Dorsolateral prefrontal cortex (tissue), 120 donors: ENCODE measurements at regions of chr9 and their contacts with region 1.

Region 1: GRCh38 chr9:137188490-137189296 is at the starts of genes ANAPC2 and SSNA1:
- DNase-seq: peak; percentile 85 to 93 (median 91)
- H3K4me3 ChIP-seq: peak within 1 kb of the TSS; percentile 59 to 100 (median 97)
- H3K27ac ChIP-seq: peak within 1 kb of the TSS; percentile 84 to 100 (median 99)
- H3K27me3 ChIP-seq: no peaks in the 10 kb centered on the region
- CTCF ChIP-seq: peak in 55 of 56 donors; percentile 11 to 85 (median 53)
- total RNA-seq, gene ANAPC2: 51.4 to 105 (median 68.3) TPM
- total RNA-seq, gene SSNA1: 37.0 to 77.8 (median 49.6) TPM

Region 2: DNA sequence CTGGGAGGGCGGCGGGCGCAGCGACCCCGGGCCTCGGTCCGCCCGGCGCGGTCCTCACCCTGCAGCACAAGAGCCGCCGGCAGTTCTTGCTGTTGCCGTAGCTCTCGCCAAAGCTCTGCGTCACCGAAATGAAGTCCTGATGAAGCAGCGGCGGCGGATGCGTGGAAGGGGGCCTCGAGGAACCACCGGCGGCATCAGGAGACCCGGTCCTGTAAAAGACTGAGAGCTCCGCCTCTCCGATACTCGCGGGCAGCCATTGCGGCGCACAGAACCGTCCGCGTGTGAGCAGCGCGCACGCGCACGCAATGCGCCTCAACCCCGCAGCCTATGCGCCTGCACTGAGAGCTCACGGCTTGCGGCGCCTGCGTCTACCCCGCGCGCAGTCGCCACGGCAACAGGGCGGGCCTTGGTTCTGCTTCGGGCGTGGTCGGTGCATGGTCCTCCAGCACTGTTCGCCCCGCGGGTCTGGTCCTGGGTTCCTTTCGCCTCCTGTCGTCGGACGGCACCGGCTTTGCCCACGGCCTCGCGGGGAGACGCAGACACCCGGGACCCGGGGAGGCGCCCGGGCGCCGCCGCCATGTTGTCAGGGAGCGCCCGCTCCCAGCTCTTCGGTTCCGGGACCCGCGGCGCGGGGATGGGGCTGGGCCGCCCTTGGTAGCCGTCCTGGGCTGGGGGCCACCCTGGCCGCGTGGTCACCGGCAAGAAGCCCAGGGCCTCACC is 59.1 kb before region 1 on chr9:
- intact Hi-C with region 1: loop called in 1 of 2 experiments (anchors 5 kb)
- DNase-seq: peak; percentile 70 to 92 (median 86)
- H3K4me3 ChIP-seq: peak overlapping the region; percentile 54 to 88 (median 78)
- H3K27ac ChIP-seq: peak overlapping the region in 55 of 59 donors; percentile 24 to 89 (median 73)
- H3K27me3 ChIP-seq: peaks cover 0 to 18% (median 0%) of the 10 kb centered on the region in 45 donors
- CTCF ChIP-seq: peak in 9 of 56 donors; percentile 9 to 38 (median 20)

Region 3: GRCh38 chr9:137200311-137201204 is 11.9 kb after region 1 on chr9 and contains the start of gene TPRN:
- intact Hi-C with region 1: loop called in 1 of 2 experiments (anchors 1 kb)
- DNase-seq: peak; percentile 98 to 100 (median 100)
- H3K4me3 ChIP-seq: peak within 1 kb of the TSS; percentile 53 to 100 (median 75)
- H3K27ac ChIP-seq: peak within 1 kb of the TSS in 58 of 59 donors; percentile 18 to 100 (median 99)
- H3K27me3 ChIP-seq: no peaks in the 10 kb centered on the region
- CTCF ChIP-seq: peak in 36 of 56 donors; percentile 5 to 65 (median 38)
- total RNA-seq, gene TPRN: 26.2 to 176 (median 57.3) TPM

Region 4: GRCh38 chr9:137223078-137223970 is 34.6 kb after region 1 on chr9:
- intact Hi-C with region 1: loop called (anchors 1 kb)
- DNase-seq: peak; percentile 93 to 97 (median 96)
- H3K4me3 ChIP-seq: peak overlapping the region; percentile 46 to 97 (median 78)
- H3K27ac ChIP-seq: peak overlapping the region; percentile 38 to 97 (median 88)
- H3K27me3 ChIP-seq: peaks cover 0 to 4% (median 0%) of the 10 kb centered on the region in 45 donors
- CTCF ChIP-seq: peak in 14 of 56 donors; percentile 10 to 51 (median 19)

Region 5: GRCh38 chr9:137240861-137241489 is 52.3 kb after region 1 on chr9 and contains the start of gene TUBB4B:
- intact Hi-C with region 1: loop called (anchors 2 kb)
- DNase-seq: peak; percentile 99 to 100 (median 100)
- H3K4me3 ChIP-seq: peak within 1 kb of the TSS; percentile 74 to 98 (median 86)
- H3K27ac ChIP-seq: peak within 1 kb of the TSS; percentile 79 to 99 (median 98)
- H3K27me3 ChIP-seq: no peaks in the 10 kb centered on the region
- CTCF ChIP-seq: peak in 13 of 56 donors; percentile 2 to 54 (median 17)
- total RNA-seq, gene TUBB4B: 132 to 331 (median 230) TPM